ENCODE measurements at regions of chr4 and their contacts with region 1.

Region 1: GRCh38 chr4:71009890-71010588 is 16.6 kb downstream of the DCK start:
- DNase-seq: peak in 4 of 5 donors; percentile 28 to 56 (median 49)
- H3K4me3 ChIP-seq: no peak overlapping the region
- H3K4me3 Mint-ChIP-seq: peak overlapping the region in 2 of 8 donors; percentile 18 to 29
- H3K27ac ChIP-seq: peak overlapping the region; percentile 5
- H3K27ac Mint-ChIP-seq: peak overlapping the region; percentile 7 to 79 (median 60)
- H3K4me1 ChIP-seq: peaks cover 46% of the 10 kb centered on the region
- H3K4me1 Mint-ChIP-seq: peaks cover 22 to 43% (median 33%) of the 10 kb centered on the region in 4 donors
- H3K27me3 ChIP-seq: no peaks in the 10 kb centered on the region
- H3K27me3 Mint-ChIP-seq: no peaks in the 10 kb centered on the region

Region 2: GRCh38 chr4:70601422-70602039 is 408.5 kb before region 1 on chr4:
- CTCF ChIA-PET with region 1: no interaction called
- POLR2A ChIA-PET with region 1: no interaction called
- intact Hi-C with region 1: loop called (anchors 1 kb)
- DNase-seq: peak; percentile 61 to 65 (median 64)
- H3K4me3 ChIP-seq: no peak overlapping the region
- H3K4me3 Mint-ChIP-seq: no peak overlapping the region
- H3K27ac ChIP-seq: no peak overlapping the region
- H3K27ac Mint-ChIP-seq: no peak overlapping the region
- H3K4me1 ChIP-seq: no peaks in the 10 kb centered on the region
- H3K4me1 Mint-ChIP-seq: no peaks in the 10 kb centered on the region
- H3K27me3 ChIP-seq: no peaks in the 10 kb centered on the region
- H3K27me3 Mint-ChIP-seq: peaks cover 2 to 6% of the 10 kb centered on the region in 2 donors

Region 3: GRCh38 chr4:70901984-70902576 is 108.0 kb before region 1 on chr4 and contains the start of gene MOB1B:
- CTCF ChIA-PET with region 1: interaction called, 6 read pairs
- POLR2A ChIA-PET with region 1: no interaction called
- intact Hi-C with region 1: loop called (anchors 1 kb)
- DNase-seq: peak; percentile 81 to 88 (median 82)
- H3K4me3 ChIP-seq: peak within 1 kb of the TSS; percentile 79 to 95
- H3K4me3 Mint-ChIP-seq: peak within 1 kb of the TSS; percentile 97 to 99 (median 98)
- H3K27ac ChIP-seq: peak within 1 kb of the TSS; percentile 71
- H3K27ac Mint-ChIP-seq: peak within 1 kb of the TSS; percentile 49 to 94 (median 92)
- H3K4me1 ChIP-seq: peaks cover 17% of the 10 kb centered on the region
- H3K4me1 Mint-ChIP-seq: peaks cover 17 to 41% (median 26%) of the 10 kb centered on the region in 4 donors
- H3K27me3 ChIP-seq: no peaks in the 10 kb centered on the region
- H3K27me3 Mint-ChIP-seq: peaks cover 0 to 1% of the 10 kb centered on the region in 2 donors
- total RNA-seq, gene MOB1B: 10.2 to 10.8 TPM

Region 4: GRCh38 chr4:70993181-70994068 is 16.6 kb before region 1 on chr4 and contains the start of gene DCK:
- CTCF ChIA-PET with region 1: interaction called, 127 read pairs
- POLR2A ChIA-PET with region 1: interaction called, 22 read pairs
- intact Hi-C with region 1: loop called (anchors 1 kb)
- DNase-seq: peak; percentile 82 to 87 (median 84)
- H3K4me3 ChIP-seq: peak within 1 kb of the TSS; percentile 81 to 99
- H3K4me3 Mint-ChIP-seq: peak within 1 kb of the TSS; percentile 88 to 99 (median 96)
- H3K27ac ChIP-seq: peak within 1 kb of the TSS; percentile 80
- H3K27ac Mint-ChIP-seq: peak within 1 kb of the TSS; percentile 87 to 98 (median 95)
- H3K4me1 ChIP-seq: peaks cover 50% of the 10 kb centered on the region
- H3K4me1 Mint-ChIP-seq: peaks cover 35 to 55% (median 42%) of the 10 kb centered on the region in 4 donors
- H3K27me3 ChIP-seq: no peaks in the 10 kb centered on the region
- H3K27me3 Mint-ChIP-seq: no peaks in the 10 kb centered on the region
- total RNA-seq, gene DCK: 54.7 to 56.9 TPM

Region 5: GRCh38 chr4:71026086-71026485 is 16.0 kb after region 1 on chr4:
- CTCF ChIA-PET with region 1: interaction called, 13 read pairs
- POLR2A ChIA-PET with region 1: no interaction called
- intact Hi-C with region 1: no loop called
- DNase-seq: no peak
- H3K4me3 ChIP-seq: no peak overlapping the region
- H3K4me3 Mint-ChIP-seq: no peak overlapping the region
- H3K27ac ChIP-seq: no peak overlapping the region
- H3K27ac Mint-ChIP-seq: peak overlapping the region in 3 of 7 donors; percentile 15 to 53 (median 39)
- H3K4me1 ChIP-seq: no peaks in the 10 kb centered on the region
- H3K4me1 Mint-ChIP-seq: peaks cover 5 to 19% (median 10%) of the 10 kb centered on the region in 4 donors
- H3K27me3 ChIP-seq: no peaks in the 10 kb centered on the region
- H3K27me3 Mint-ChIP-seq: no peaks in the 10 kb centered on the region